Caco-2 (cell line): ENCODE measurements at regions of chrX and their contacts with region 1.

Region 1: GRCh38 chrX:101206471-101206870 is 13.1 kb upstream of the DRP2 start:
- DNase-seq: peak in 1 of 2 experiments; percentile 29
- H3K4me3 ChIP-seq: no peak overlapping the region
- H3K4me3 Mint-ChIP-seq: no peak overlapping the region
- H3K27ac Mint-ChIP-seq: no peak overlapping the region
- H3K4me1 ChIP-seq: no peaks in the 10 kb centered on the region
- H3K4me1 Mint-ChIP-seq: peaks cover 7% of the 10 kb centered on the region
- H3K27me3 ChIP-seq: no peaks in the 10 kb centered on the region
- H3K27me3 Mint-ChIP-seq: no peaks in the 10 kb centered on the region
- CTCF ChIP-seq: peak; percentile 20 to 42

Region 2: DNA sequence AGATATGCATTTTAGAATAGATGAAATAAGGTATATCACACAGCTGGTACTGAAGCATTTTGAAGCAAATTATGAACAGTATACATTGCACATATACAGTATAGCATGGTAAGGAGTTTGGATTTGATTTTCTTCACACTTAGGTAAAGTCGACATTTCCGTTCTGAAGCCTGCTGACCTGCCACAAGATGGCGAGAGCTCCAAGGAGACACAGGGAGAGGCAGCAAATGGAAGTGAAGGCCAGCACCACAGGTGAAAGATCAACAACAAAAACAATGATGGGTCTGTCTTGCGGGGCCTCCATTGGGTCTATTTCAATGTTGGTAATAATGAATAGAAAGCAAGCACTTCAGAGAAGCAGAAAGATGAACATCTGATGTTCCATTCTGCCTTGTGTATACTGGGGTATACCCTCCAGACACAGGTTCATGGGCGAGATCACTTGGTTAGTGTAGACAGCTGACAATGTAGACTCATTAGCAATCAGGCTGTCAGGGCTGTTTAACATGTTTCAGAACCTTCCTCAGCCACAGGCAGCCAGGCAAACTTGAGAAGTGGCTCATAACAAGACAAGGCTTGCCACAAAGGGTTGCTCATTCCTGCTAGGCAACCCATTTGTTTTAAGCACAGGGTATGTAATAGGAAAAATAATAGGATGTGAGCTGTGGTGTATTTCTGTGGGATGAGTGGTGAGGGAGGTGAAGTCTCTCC is 311.0 kb before region 1 on chrX:
- CTCF ChIA-PET with region 1: interaction called, 3 read pairs
- POLR2A ChIA-PET with region 1: no interaction called
- intact Hi-C with region 1: loop called (anchors 2 kb)
- DNase-seq: peak; percentile 53
- H3K4me3 ChIP-seq: no peak overlapping the region
- H3K4me3 Mint-ChIP-seq: no peak overlapping the region
- H3K27ac Mint-ChIP-seq: no peak overlapping the region
- H3K4me1 ChIP-seq: peaks cover 7% of the 10 kb centered on the region; the same call in 1 of the 2 replicates
- H3K4me1 Mint-ChIP-seq: peaks cover 13% of the 10 kb centered on the region
- H3K27me3 ChIP-seq: no peaks in the 10 kb centered on the region
- H3K27me3 Mint-ChIP-seq: no peaks in the 10 kb centered on the region
- CTCF ChIP-seq: peak; percentile 36 to 66

Region 3: GRCh38 chrX:101265869-101266428 is 59.5 kb after region 1 on chrX:
- CTCF ChIA-PET with region 1: no interaction called
- POLR2A ChIA-PET with region 1: no interaction called
- intact Hi-C with region 1: no loop called
- DNase-seq: no peak
- H3K4me3 ChIP-seq: no peak overlapping the region
- H3K4me3 Mint-ChIP-seq: no peak overlapping the region
- H3K27ac Mint-ChIP-seq: no peak overlapping the region
- H3K4me1 ChIP-seq: no peaks in the 10 kb centered on the region
- H3K4me1 Mint-ChIP-seq: no peaks in the 10 kb centered on the region
- H3K27me3 ChIP-seq: no peaks in the 10 kb centered on the region
- H3K27me3 Mint-ChIP-seq: no peaks in the 10 kb centered on the region
- CTCF ChIP-seq: no peak